Endothelial cell of umbilical vein (primary cell): ENCODE measurements at regions of chr1 and their contacts with region 1.

Region 1: DNA sequence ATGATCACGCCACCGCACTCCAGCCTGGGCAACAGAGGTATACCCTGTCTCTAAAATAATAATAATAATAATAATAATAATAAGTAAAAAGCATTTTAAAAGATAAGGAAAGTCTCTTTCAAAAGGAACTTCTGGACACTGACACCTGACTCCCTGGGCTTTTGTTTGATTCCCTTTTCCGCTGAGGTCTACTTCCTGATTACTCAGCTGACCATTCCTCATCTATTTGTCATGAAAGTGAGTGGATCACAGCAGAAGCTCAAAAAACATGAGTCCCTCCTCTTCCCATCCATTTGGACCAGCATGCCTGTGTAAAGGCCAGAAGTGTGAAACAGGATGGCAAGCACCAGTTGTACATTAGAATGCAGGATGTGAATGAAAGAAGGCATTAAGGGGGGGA is 61.1 kb upstream of the FBXO28 start:
- DNase-seq: peak; percentile 96
- H3K4me3 ChIP-seq: no peak overlapping the region
- H3K27ac ChIP-seq: peak overlapping the region; percentile 92
- H3K4me1 ChIP-seq: peaks cover 37% of the 10 kb centered on the region
- H3K27me3 ChIP-seq: no peaks in the 10 kb centered on the region
- CTCF ChIP-seq: no peak
- POLR2A ChIP-seq: peak; percentile 24

Region 2: DNA sequence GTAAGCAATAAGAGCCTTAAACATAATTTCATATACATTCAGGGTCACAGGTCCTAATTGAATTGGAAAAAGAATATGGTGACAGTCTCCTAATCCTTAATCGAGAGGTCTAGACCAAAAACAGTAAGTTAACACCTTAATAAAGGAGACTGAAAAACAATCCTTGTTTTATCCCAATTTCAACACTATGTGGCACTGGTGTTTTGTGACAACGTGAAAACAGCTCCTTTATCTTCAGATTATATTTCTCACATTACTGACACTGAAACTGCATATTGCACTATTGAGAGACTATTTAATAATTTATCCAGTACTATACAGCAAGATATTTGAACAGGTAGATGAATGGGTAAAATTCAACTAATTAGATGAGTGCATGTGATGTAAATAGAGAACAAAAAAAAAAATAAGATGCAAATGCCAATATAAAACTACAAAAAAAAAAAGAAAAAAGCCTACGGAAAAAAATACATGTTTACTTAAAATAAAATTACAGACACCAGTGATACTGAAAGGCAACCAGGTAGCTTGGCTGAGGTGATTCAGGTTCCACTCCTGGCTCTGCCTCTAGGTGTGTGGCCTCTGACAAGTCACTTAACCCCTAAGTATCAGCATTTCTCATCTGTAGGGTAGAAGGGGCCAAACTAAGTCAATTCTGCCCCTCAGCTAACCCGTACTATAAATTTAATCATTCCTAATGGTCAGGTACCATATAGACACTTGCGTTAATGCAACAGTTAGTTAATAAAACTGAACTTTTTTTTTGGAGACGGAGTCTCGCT is 240.9 kb before region 1 on chr1:
- CTCF ChIA-PET with region 1: interaction called, 25 read pairs
- POLR2A ChIA-PET with region 1: no interaction called
- dilution Hi-C with region 1: no loop called
- intact Hi-C with region 1: loop called (anchors 1 kb)
- DNase-seq: peak; percentile 68
- H3K4me3 ChIP-seq: no peak overlapping the region
- H3K27ac ChIP-seq: no peak overlapping the region
- H3K4me1 ChIP-seq: peaks cover 15% of the 10 kb centered on the region
- H3K27me3 ChIP-seq: no peaks in the 10 kb centered on the region
- CTCF ChIP-seq: peak; percentile 18 to 22
- POLR2A ChIP-seq: no peak

Region 3: GRCh38 chr1:224042557-224043118 is 10.1 kb before region 1 on chr1:
- CTCF ChIA-PET with region 1: interaction called, 5 read pairs
- POLR2A ChIA-PET with region 1: no interaction called
- dilution Hi-C with region 1: no loop called
- intact Hi-C with region 1: loop called (anchors 1 kb)
- DNase-seq: peak; percentile 54
- H3K4me3 ChIP-seq: no peak overlapping the region
- H3K27ac ChIP-seq: no peak overlapping the region
- H3K4me1 ChIP-seq: peaks cover 9% of the 10 kb centered on the region
- H3K27me3 ChIP-seq: no peaks in the 10 kb centered on the region
- CTCF ChIP-seq: no peak
- POLR2A ChIP-seq: no peak

Region 4: DNA sequence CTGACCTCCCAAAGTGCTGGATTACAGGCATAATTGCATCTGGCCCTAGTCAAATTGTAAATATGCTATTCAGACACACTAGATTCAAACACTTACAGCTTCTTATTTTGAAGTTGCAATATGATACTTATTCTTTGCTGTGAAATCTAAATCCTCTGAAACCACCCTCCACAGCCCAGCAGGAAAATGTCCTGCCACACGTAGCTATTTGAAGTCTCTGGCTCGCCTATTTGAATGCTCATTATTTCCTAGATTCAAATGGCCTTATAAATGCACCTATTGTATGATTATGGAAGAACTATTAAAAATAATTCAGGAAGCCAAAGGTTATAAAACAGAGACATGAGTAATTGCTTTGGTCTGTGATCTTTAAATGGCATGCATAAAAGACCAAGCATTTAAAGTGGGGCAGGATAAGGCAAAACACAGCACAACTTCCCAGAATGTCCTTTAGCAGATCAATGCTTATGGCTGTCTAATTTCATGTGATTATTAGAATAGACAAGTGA is 34.6 kb after region 1 on chr1:
- CTCF ChIA-PET with region 1: interaction called, 11 read pairs
- POLR2A ChIA-PET with region 1: no interaction called
- dilution Hi-C with region 1: no loop called
- intact Hi-C with region 1: no loop called
- DNase-seq: peak; percentile 36
- H3K4me3 ChIP-seq: no peak overlapping the region
- H3K27ac ChIP-seq: no peak overlapping the region
- H3K4me1 ChIP-seq: peaks cover 5% of the 10 kb centered on the region
- H3K27me3 ChIP-seq: no peaks in the 10 kb centered on the region
- CTCF ChIP-seq: no peak
- POLR2A ChIP-seq: no peak

Region 5: GRCh38 chr1:224317383-224318024 is 264.7 kb after region 1 on chr1:
- CTCF ChIA-PET with region 1: no interaction called
- POLR2A ChIA-PET with region 1: no interaction called
- dilution Hi-C with region 1: no loop called
- intact Hi-C with region 1: no loop called
- DNase-seq: no peak
- H3K4me3 ChIP-seq: no peak overlapping the region
- H3K27ac ChIP-seq: no peak overlapping the region
- H3K4me1 ChIP-seq: no peaks in the 10 kb centered on the region
- H3K27me3 ChIP-seq: no peaks in the 10 kb centered on the region
- CTCF ChIP-seq: no peak
- POLR2A ChIP-seq: no peak